Psoas muscle (tissue), 8 donors: ENCODE measurements at regions of chr15 and their contacts with region 1.

Region 1: GRCh38 chr15:55928955-55929354 is 64.5 kb downstream of the NEDD4 start:
- DNase-seq: no peak
- ATAC-seq: no peak
- H3K4me3 ChIP-seq: no peak overlapping the region
- H3K27ac ChIP-seq: no peak overlapping the region
- H3K4me1 ChIP-seq: no peaks in the 10 kb centered on the region
- H3K27me3 ChIP-seq: no peaks in the 10 kb centered on the region
- CTCF ChIP-seq: no peak

Region 2: DNA sequence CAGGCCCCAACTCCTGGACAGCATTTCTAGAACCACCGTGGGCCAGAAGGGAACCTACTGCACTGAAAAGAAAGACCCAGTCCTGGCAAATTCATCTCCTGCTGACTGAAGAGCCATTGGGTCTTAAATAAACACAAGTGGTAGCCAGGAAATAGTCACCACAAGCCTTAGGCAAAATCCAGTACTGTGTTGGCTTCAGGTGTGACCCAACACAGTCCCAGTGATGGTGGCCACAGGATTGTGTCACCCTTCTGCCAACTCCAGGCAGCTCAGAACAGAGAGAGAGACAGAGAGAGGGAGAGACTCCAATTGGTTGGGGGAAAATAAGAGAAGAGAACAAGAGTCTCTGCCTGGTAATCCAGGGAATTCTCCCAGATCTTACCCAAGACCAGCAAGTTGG is 41.3 kb after region 1 on chr15:
- intact Hi-C with region 1: loop called in 1 of 2 experiments (anchors 5 kb)
- DNase-seq: no peak
- ATAC-seq: peak in 2 of 4 donors; percentile 52 to 65
- H3K4me3 ChIP-seq: no peak overlapping the region
- H3K27ac ChIP-seq: no peak overlapping the region
- H3K4me1 ChIP-seq: no peaks in the 10 kb centered on the region
- H3K27me3 ChIP-seq: no peaks in the 10 kb centered on the region
- CTCF ChIP-seq: no peak